PC-3 (cell line): ENCODE measurements at regions of chr17 and their contacts with region 1.

Region 1: GRCh38 chr17:1186923-1187771 is 7.4 kb upstream of the ABR start:
- DNase-seq: peak; percentile 71
- ATAC-seq: peak; percentile 91
- H3K4me3 ChIP-seq: no peak overlapping the region
- H3K27ac ChIP-seq: no peak overlapping the region
- H3K4me1 ChIP-seq: peaks cover 10% of the 10 kb centered on the region
- H3K27me3 ChIP-seq: no peaks in the 10 kb centered on the region
- CTCF ChIP-seq: peak; percentile 85

Region 2: DNA sequence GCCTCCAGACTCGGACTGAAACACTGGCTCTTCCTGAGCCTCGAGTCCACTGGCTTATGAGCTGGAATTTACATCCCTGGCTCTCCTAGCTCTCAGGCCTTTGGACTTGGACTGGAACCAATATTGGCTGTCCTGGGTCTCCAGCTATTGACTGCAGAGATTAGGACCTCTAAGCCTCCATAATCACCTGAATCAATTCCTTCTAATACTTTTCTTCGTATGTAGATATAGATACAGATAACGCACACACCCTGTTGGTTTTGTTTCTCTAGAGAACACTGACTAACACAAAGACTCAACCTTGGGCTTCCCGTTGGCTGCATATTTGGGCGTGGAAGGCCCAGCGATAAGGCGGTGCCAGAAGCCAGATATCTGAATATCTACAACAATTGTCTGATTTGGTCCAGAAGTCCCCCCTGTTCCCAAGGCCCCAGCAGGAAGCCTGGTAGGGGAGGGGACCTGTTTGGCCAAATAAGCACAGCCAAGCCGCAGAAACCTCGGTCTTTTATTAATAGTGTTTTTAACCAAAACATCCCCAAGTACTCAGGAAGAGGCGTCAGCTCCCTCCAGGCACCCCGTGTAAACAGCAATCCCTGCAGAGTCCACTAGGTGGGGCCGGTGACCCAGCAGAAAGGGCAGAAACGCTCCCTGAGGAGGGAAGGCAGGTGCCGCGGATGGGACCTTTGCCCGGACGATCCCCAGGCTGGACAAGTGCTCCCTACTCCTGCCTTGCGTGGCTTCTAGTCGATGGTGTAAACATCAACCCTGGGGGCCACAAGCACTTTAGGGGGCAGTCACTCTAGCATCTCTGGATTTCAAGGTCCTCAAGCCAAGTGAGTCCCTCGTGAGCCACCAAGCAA is 64.4 kb before region 1 on chr17:
- CTCF ChIA-PET with region 1: interaction called, 5 read pairs
- POLR2A ChIA-PET with region 1: no interaction called
- intact Hi-C with region 1: loop called (anchors 2 kb)
- DNase-seq: peak; percentile 74
- ATAC-seq: peak; percentile 87
- H3K4me3 ChIP-seq: no peak overlapping the region; the same call in 1 of the 2 replicates
- H3K27ac ChIP-seq: peak overlapping the region; percentile 20
- H3K4me1 ChIP-seq: peaks cover 8% of the 10 kb centered on the region
- H3K27me3 ChIP-seq: no peaks in the 10 kb centered on the region
- CTCF ChIP-seq: peak; percentile 81